WTC11 (cell line): ENCODE measurements at regions of chr5 and their contacts with region 1.

Region 1: DNA sequence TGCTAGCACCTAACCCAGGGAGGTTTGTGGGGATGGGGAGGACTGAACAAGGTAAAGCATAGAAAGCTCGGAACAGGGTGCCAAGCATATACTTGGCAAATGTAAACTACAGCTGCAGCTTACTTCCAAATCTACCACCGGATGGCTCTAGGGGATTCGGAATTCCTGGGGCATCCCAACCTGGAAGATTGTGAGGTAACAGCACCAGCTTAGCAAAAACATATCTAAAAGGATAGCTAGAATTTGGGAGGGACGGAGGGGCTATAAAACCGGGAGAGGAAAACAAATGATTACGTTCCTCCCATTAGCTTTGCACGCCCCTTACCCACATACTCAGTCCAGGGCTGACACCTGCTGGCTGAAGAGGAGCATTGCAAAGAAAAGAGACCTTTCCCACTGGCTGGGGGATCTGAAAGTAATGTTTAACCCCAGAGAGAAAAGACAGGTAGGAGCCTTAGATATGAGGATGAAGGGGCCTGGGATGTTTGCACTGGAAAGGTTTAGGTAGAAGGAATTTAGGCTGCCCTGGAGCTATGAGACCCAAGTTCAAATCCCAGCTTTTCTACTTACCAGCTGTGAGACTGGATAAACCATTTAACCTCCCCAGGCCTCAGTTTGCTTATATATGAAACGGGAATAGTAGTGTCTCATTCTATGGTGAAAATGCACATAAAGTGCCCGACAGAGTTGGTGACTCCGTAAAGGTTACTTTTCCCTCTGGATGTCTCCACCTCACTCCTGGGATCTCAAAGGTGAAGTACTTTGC is 73.6 kb downstream of the FAM114A2 start:
- DNase-seq: peak; percentile 70
- ATAC-seq: peak; percentile 85
- H3K4me3 Mint-ChIP-seq: peak overlapping the region; percentile 69
- H3K27ac Mint-ChIP-seq: no peak overlapping the region
- H3K4me1 Mint-ChIP-seq: peaks cover 15% of the 10 kb centered on the region
- H3K27me3 Mint-ChIP-seq: no peaks in the 10 kb centered on the region; the same call in 1 of the 2 replicates
- CTCF ChIP-seq: peak; percentile 85

Region 2: GRCh38 chr5:152560512-152561137 is 1404.4 kb before region 1 on chr5:
- CTCF ChIA-PET with region 1: interaction called, 10 read pairs
- POLR2A ChIA-PET with region 1: no interaction called
- DNase-seq: peak; percentile 76
- ATAC-seq: peak; percentile 91
- H3K4me3 Mint-ChIP-seq: no peak overlapping the region
- H3K27ac Mint-ChIP-seq: no peak overlapping the region
- H3K4me1 Mint-ChIP-seq: peaks cover 7% of the 10 kb centered on the region
- H3K27me3 Mint-ChIP-seq: no peaks in the 10 kb centered on the region
- CTCF ChIP-seq: peak; percentile 71

Region 3: DNA sequence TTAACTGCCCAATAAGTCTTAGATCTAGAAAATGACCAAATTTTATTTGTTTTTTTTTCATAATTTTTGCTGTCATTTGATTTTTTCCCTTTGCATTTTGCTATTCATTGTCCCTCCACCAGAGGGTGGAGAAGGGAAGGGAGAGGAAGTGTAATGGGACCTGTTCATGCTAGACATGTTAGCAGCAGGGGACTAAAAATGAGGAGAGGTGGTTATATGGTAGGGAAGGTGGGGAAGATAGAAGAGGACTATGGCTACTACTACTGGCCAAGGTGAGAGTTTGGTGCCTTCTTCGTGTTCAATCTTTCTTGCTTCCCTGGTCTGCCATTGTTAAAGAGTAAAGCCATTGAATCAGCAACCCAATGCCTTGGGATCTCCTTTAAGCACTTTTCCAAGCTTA is 468.2 kb before region 1 on chr5:
- CTCF ChIA-PET with region 1: interaction called, 15 read pairs
- POLR2A ChIA-PET with region 1: no interaction called
- DNase-seq: no peak
- ATAC-seq: peak; percentile 72
- H3K4me3 Mint-ChIP-seq: no peak overlapping the region
- H3K27ac Mint-ChIP-seq: no peak overlapping the region
- H3K4me1 Mint-ChIP-seq: peaks cover 8% of the 10 kb centered on the region
- H3K27me3 Mint-ChIP-seq: peaks cover 3% of the 10 kb centered on the region
- CTCF ChIP-seq: peak; percentile 51

Region 4: GRCh38 chr5:153816870-153817269 is 148.2 kb before region 1 on chr5:
- CTCF ChIA-PET with region 1: interaction called, 11 read pairs
- POLR2A ChIA-PET with region 1: no interaction called
- DNase-seq: no peak
- ATAC-seq: no peak
- H3K4me3 Mint-ChIP-seq: no peak overlapping the region
- H3K27ac Mint-ChIP-seq: no peak overlapping the region
- H3K4me1 Mint-ChIP-seq: no peaks in the 10 kb centered on the region
- H3K27me3 Mint-ChIP-seq: no peaks in the 10 kb centered on the region
- CTCF ChIP-seq: no peak

Region 5: GRCh38 chr5:154333016-154333415 is 368.0 kb after region 1 on chr5:
- CTCF ChIA-PET with region 1: no interaction called
- POLR2A ChIA-PET with region 1: no interaction called
- DNase-seq: no peak
- ATAC-seq: no peak
- H3K4me3 Mint-ChIP-seq: no peak overlapping the region
- H3K27ac Mint-ChIP-seq: no peak overlapping the region
- H3K4me1 Mint-ChIP-seq: no peaks in the 10 kb centered on the region
- H3K27me3 Mint-ChIP-seq: no peaks in the 10 kb centered on the region
- CTCF ChIP-seq: no peak